ENCODE measurements at regions of chr2 and their contacts with region 1.

Region 1: GRCh38 chr2:113219889-113220641 is 46.3 kb downstream of the PSD4 start:
- DNase-seq: no peak
- H3K4me3 ChIP-seq: no peak overlapping the region
- H3K27ac ChIP-seq: no peak overlapping the region
- H3K4me1 ChIP-seq: peaks cover 16% of the 10 kb centered on the region
- H3K27me3 ChIP-seq: peaks cover 0 to 5% of the 10 kb centered on the region in 2 experiments
- CTCF ChIP-seq: no peak
- POLR2A ChIP-seq: no peak

Region 2: GRCh38 chr2:113234721-113235346 is 14.8 kb after region 1 on chr2:
- CTCF ChIA-PET with region 1: interaction called, 8 read pairs
- POLR2A ChIA-PET with region 1: interaction called, 5 read pairs
- dilution Hi-C with region 1: no loop called
- intact Hi-C with region 1: loop called (anchors 1 kb)
- DNase-seq: no peak
- H3K4me3 ChIP-seq: peak overlapping the region in 1 of 3 experiments; percentile 89
- H3K27ac ChIP-seq: no peak overlapping the region
- H3K4me1 ChIP-seq: peaks cover 2% of the 10 kb centered on the region
- H3K27me3 ChIP-seq: no peaks in the 10 kb centered on the region
- CTCF ChIP-seq: no peak
- POLR2A ChIP-seq: no peak

Region 3: DNA sequence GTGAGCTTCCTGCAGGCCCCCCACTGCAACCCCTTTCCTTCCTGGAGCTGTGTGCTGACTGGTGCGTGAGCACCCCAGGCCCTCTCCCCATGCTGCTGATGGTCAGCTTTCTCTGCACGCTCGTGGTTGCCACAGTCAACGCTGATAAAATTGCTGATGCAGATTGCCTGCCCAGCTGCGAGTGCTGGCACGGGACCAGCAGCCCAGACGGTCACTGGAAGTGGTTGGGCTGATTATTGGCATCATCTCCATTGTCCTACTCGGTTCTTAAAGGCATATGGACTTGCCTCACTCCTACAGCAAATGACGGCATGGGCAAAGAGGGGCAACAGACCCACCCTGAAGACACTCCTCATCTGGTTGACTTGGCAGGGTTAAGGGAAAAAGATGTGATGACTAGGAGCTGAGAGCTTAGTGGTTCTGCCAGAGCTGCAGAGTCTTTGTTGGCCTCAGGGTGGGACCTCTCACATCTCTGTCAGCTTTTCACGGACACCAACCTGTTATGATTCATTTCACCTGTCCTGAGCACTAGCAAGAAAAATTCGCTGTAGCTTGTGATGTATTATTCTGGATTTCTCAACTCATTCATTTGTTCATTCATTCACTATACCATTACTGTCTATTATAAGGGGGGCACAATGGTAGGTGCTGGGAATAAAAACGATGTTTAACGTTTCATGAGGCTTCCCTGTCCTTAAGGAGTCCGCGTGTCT is 20.2 kb after region 1 on chr2:
- CTCF ChIA-PET with region 1: interaction called, 5 read pairs
- POLR2A ChIA-PET with region 1: interaction called, 4 read pairs
- dilution Hi-C with region 1: no loop called
- intact Hi-C with region 1: loop called (anchors 2 kb)
- DNase-seq: peak; percentile 89
- H3K4me3 ChIP-seq: no peak overlapping the region
- H3K27ac ChIP-seq: peak overlapping the region; percentile 32
- H3K4me1 ChIP-seq: peaks cover 19% of the 10 kb centered on the region
- H3K27me3 ChIP-seq: no peaks in the 10 kb centered on the region
- CTCF ChIP-seq: no peak
- POLR2A ChIP-seq: no peak

Measured in endothelial cell of umbilical vein (primary cell).